ENCODE measurements at regions of chr2 and their contacts with region 1.

Region 1: GRCh38 chr2:162123806-162124758 is 28.0 kb downstream of the GCG start:
- DNase-seq: no peak
- H3K4me3 ChIP-seq: no peak overlapping the region
- H3K27ac ChIP-seq: no peak overlapping the region
- H3K4me1 ChIP-seq: peaks cover 0 to 15% (median 5%) of the 10 kb centered on the region in 4 donors
- H3K27me3 ChIP-seq: no peaks in the 10 kb centered on the region
- CTCF ChIP-seq: peak; percentile 20 to 79 (median 64)
- EP300 ChIP-seq: no peak
- POLR2A ChIP-seq: no peak

Region 2: DNA sequence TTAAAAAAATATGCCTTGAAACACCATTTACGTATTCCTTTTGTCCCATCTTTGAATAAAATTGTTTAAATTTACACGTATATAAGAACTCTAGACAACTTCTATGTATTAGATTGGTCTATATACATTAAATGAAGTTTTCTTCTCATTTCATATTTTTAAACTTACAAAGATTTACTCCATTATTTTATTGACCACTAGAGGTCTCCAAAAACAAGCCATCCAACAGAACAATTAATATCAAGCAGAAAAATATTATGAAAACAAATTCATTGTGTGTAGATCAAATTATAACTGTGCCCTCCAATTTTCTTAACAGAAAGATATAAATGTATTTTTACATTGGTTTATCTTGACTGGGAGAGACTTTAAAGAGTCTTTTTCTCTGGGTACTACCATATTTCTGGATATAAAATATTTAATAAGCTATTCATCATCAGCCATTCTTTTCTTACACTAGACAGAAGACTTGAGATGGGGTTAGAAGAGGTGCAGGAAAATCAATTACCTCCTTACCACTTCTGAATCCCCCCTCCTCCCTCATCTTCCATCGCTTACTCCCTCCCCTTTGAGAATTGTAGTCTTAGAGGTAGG is 116.5 kb before region 1 on chr2:
- intact Hi-C with region 1: loop called (anchors 1 kb)
- DNase-seq: no peak
- H3K4me3 ChIP-seq: no peak overlapping the region
- H3K27ac ChIP-seq: no peak overlapping the region
- H3K4me1 ChIP-seq: peaks cover 0 to 5% (median 0%) of the 10 kb centered on the region in 4 donors
- H3K27me3 ChIP-seq: no peaks in the 10 kb centered on the region
- CTCF ChIP-seq: peak in 3 of 4 experiments; percentile 39 to 69 (median 45)
- EP300 ChIP-seq: no peak
- POLR2A ChIP-seq: no peak

Region 3: GRCh38 chr2:162073888-162074645 is 50.0 kb before region 1 on chr2 and contains the start of gene DPP4:
- intact Hi-C with region 1: loop called (anchors 5 kb)
- DNase-seq: peak; percentile 72
- H3K4me3 ChIP-seq: peak within 1 kb of the TSS; percentile 51 to 66 (median 60)
- H3K27ac ChIP-seq: peak within 1 kb of the TSS in 3 of 4 donors; percentile 43 to 58 (median 56)
- H3K4me1 ChIP-seq: peaks cover 0 to 54% (median 36%) of the 10 kb centered on the region in 4 donors
- H3K27me3 ChIP-seq: no peaks in the 10 kb centered on the region
- CTCF ChIP-seq: no peak
- EP300 ChIP-seq: no peak
- POLR2A ChIP-seq: no peak
- total RNA-seq, gene DPP4: 5.8 to 11.9 (median 11.2) TPM